WTC11 (cell line): ENCODE measurements at regions of chr10 and their contacts with region 1.

Region 1: GRCh38 chr10:70622981-70623844 is 20.7 kb upstream of the PRF1 start:
- DNase-seq: no peak
- ATAC-seq: peak; percentile 2; the same call in 1 of the 2 replicates
- H3K4me3 Mint-ChIP-seq: peak overlapping the region; percentile 14; the same call in 1 of the 2 replicates
- H3K27ac Mint-ChIP-seq: peak overlapping the region; percentile 98
- H3K4me1 Mint-ChIP-seq: peaks cover 57% of the 10 kb centered on the region
- H3K27me3 Mint-ChIP-seq: peaks cover 5% of the 10 kb centered on the region; the same call in 1 of the 2 replicates
- CTCF ChIP-seq: no peak

Region 2: GRCh38 chr10:70758757-70759514 is 135.7 kb after region 1 on chr10:
- CTCF ChIA-PET with region 1: interaction called, 10 read pairs
- POLR2A ChIA-PET with region 1: interaction called, 3 read pairs
- DNase-seq: peak; percentile 84
- ATAC-seq: peak; percentile 68
- H3K4me3 Mint-ChIP-seq: no peak overlapping the region
- H3K27ac Mint-ChIP-seq: no peak overlapping the region
- H3K4me1 Mint-ChIP-seq: peaks cover 33% of the 10 kb centered on the region
- H3K27me3 Mint-ChIP-seq: no peaks in the 10 kb centered on the region
- CTCF ChIP-seq: peak; percentile 46; the same call in 1 of the 2 replicates